ENCODE measurements at regions of chr1 and their contacts with region 1.

Region 1: GRCh38 chr1:114716304-114717170 is at the start of gene NRAS:
- DNase-seq: peak; percentile 89 to 96 (median 92)
- H3K4me3 ChIP-seq: peak within 1 kb of the TSS; percentile 63
- H3K27ac ChIP-seq: peak within 1 kb of the TSS in 1 of 2 donors; percentile 44
- H3K4me1 ChIP-seq: peaks cover 2% of the 10 kb centered on the region
- H3K27me3 ChIP-seq: no peaks in the 10 kb centered on the region
- CTCF ChIP-seq: no peak
- EP300 ChIP-seq: peak; percentile 46
- POLR2A ChIP-seq: peak; percentile 47
- total RNA-seq, gene NRAS: 12.9 to 21.7 (median 16.4) TPM

Region 2: GRCh38 chr1:114346480-114347029 is 370.0 kb before region 1 on chr1:
- intact Hi-C with region 1: loop called in 1 of 4 experiments (anchors 10 kb)
- DNase-seq: peak; percentile 93 to 99 (median 96)
- H3K4me3 ChIP-seq: peak overlapping the region; percentile 41
- H3K27ac ChIP-seq: peak overlapping the region; percentile 69 to 78
- H3K4me1 ChIP-seq: no peaks in the 10 kb centered on the region
- H3K27me3 ChIP-seq: no peaks in the 10 kb centered on the region
- CTCF ChIP-seq: peak; percentile 100
- EP300 ChIP-seq: peak; percentile 17
- POLR2A ChIP-seq: no peak

Region 3: DNA sequence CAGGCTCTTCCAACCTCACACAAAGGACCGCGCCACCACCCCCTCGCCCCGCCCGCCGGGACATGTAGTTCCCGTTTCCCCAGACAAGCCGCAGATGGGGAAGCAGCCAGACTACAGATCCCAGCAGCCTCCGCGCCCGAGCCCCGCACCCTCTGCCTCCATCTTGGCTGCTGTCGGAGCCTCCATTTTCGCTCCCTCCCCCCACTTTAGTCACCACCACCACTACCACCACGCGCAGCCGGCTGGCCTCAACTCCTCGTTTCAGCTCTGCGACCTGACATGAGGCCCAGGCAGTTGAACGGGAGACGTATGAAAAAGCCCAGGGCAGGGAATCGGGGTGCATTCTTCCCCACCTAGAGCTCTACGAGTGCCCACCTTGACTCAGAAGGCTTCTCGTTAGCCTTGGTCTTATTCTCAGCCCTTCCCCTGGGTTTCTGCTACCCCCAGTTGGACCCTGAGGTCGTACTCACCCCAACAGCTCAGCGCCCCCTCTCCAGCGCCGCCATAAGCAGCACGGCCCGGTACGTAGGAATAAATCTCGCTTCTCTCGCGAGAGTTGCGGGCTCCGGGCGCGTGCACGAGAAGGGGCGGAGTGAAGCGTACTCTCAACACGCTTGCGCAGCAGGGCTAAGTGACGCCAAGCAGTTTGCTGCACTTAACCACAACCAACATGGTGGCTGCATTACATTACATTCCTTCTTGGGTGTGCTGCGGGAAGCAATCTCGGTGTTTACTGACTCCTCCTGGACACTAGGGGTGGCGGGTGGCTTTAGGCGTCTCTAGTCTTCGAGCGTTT is 41.1 kb after region 1 on chr1 and contains the start of gene CSDE1:
- intact Hi-C with region 1: loop called in 1 of 4 experiments (anchors 2 kb)
- DNase-seq: peak; percentile 96 to 98 (median 98)
- H3K4me3 ChIP-seq: peak within 1 kb of the TSS; percentile 97
- H3K27ac ChIP-seq: peak within 1 kb of the TSS; percentile 90 to 97
- H3K4me1 ChIP-seq: peaks cover 5% of the 10 kb centered on the region
- H3K27me3 ChIP-seq: no peaks in the 10 kb centered on the region
- CTCF ChIP-seq: no peak
- EP300 ChIP-seq: no peak
- POLR2A ChIP-seq: peak; percentile 95
- total RNA-seq, gene CSDE1: 357 to 752 (median 558) TPM

Measured in ovary (tissue), 10 donors.